Naive thymus-derived CD4-positive, alpha-beta T cell (primary cell): ENCODE measurements at regions of chr3 and their contacts with region 1.

Region 1: DNA sequence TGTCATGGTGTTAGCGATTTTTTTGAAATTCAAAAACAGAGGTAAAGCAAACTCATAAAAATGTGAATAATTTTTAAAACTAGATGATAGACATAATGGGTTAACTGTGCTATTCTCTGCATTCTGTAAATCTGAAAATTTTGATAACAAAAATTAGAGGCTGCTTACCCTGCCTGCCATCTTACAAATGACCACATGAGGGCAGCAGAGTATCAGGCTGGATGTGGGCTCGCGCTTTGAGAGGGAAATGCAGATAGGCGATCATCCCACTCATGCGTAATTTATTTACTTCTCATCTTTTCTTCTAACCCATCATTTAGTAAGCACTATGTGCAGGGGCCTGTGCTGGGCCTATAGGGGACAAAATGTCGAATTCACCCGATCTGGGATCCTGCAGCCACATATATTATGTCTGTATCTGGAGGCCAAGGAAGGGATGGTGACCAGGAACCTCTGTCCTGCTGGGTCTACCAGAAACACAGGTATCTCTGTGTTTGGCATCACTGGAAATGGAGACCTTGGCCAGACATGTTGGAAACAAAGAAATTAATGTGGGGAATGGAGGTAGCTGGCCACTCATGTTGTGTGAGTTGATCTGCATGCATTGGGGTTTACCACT is 7.8 kb upstream of the RAD18 start:
- DNase-seq: peak; percentile 32 to 84 (median 70)
- ATAC-seq: peak; percentile 91
- H3K4me3 ChIP-seq: no peak overlapping the region
- H3K4me3 Mint-ChIP-seq: peak overlapping the region in 1 of 10 donors; percentile 47
- H3K27ac ChIP-seq: no peak overlapping the region
- H3K27ac Mint-ChIP-seq: no peak overlapping the region
- H3K4me1 ChIP-seq: no peaks in the 10 kb centered on the region
- H3K4me1 Mint-ChIP-seq: peaks cover 0 to 5% (median 0%) of the 10 kb centered on the region in 7 donors
- H3K27me3 ChIP-seq: no peaks in the 10 kb centered on the region
- H3K27me3 Mint-ChIP-seq: peaks cover 5 to 20% (median 13%) of the 10 kb centered on the region in 5 donors

Region 2: DNA sequence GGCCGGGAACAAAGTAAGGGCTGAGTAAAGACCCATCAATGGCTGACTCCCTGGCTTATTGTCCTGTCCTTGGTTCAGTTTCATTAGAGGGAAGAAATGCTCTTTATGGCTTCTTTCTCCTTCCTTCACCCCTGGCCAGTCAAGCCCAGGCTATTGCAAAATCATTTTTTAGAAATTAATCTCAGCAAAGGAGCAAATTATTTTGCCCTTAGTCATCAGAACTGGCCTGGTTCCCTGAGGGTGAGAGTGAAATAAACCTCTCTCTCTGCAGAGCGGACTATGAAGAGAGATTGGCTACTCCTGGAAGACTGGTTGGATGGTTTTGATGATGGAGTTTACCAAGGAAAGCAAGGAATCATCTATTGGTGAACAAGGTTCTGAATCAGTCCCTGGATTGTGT is 148.9 kb before region 1 on chr3:
- CTCF ChIA-PET with region 1: no interaction called
- POLR2A ChIA-PET with region 1: no interaction called
- intact Hi-C with region 1: no loop called
- DNase-seq: no peak
- ATAC-seq: no peak
- H3K4me3 ChIP-seq: no peak overlapping the region
- H3K4me3 Mint-ChIP-seq: no peak overlapping the region
- H3K27ac ChIP-seq: no peak overlapping the region
- H3K27ac Mint-ChIP-seq: no peak overlapping the region
- H3K4me1 ChIP-seq: no peaks in the 10 kb centered on the region
- H3K4me1 Mint-ChIP-seq: peaks cover 0 to 1% (median 0%) of the 10 kb centered on the region in 7 donors
- H3K27me3 ChIP-seq: no peaks in the 10 kb centered on the region
- H3K27me3 Mint-ChIP-seq: peaks cover 0 to 5% (median 0%) of the 10 kb centered on the region in 5 donors

Region 3: GRCh38 chr3:9067352-9067975 is 96.4 kb after region 1 on chr3:
- CTCF ChIA-PET with region 1: no interaction called
- POLR2A ChIA-PET with region 1: no interaction called
- intact Hi-C with region 1: loop called (anchors 1 kb)
- DNase-seq: peak in 4 of 9 donors; percentile 3 to 15 (median 10)
- ATAC-seq: peak; percentile 47
- H3K4me3 ChIP-seq: no peak overlapping the region
- H3K4me3 Mint-ChIP-seq: no peak overlapping the region
- H3K27ac ChIP-seq: no peak overlapping the region
- H3K27ac Mint-ChIP-seq: no peak overlapping the region
- H3K4me1 ChIP-seq: no peaks in the 10 kb centered on the region
- H3K4me1 Mint-ChIP-seq: peaks cover 0 to 7% (median 0%) of the 10 kb centered on the region in 7 donors
- H3K27me3 ChIP-seq: no peaks in the 10 kb centered on the region
- H3K27me3 Mint-ChIP-seq: peaks cover 0 to 7% (median 0%) of the 10 kb centered on the region in 5 donors

Region 4: DNA sequence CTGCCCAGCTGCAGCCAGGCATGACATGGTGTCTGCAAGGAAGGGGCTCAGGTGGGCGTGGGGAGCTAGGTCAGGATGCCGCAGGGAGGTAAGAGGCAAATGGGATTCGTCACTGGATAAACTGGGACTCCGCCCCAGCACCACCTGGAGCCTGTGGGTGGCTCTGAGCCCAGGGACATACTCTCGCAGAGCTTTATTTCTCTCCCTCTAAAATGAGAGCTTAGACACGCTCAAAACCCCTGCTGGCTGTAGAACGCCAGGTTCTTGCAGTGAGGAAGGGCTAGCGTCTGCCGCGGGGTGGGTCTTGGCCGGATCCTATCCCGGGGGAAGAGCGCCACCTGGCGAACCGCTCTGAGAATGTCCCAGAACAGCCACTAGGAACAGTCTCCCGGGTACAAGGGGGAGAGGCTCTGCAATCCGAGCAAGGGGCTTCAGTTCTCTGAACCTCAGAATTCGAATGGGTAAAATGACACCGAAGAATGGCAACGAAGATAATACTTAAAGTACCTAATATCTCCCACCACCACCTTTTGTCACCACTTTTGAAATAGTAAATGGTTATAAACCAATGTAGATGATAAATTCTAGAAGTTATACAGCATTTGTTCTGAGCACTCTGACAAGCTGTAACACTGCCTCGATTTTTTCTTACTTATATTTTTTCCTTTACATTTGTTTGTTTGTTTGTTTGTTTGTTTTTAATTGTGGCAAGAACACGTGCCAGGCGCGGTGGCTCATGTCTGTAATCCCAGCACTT is 331.5 kb after region 1 on chr3:
- CTCF ChIA-PET with region 1: interaction called, 95 read pairs
- POLR2A ChIA-PET with region 1: interaction called, 3 read pairs
- intact Hi-C with region 1: loop called (anchors 1 kb)
- DNase-seq: peak; percentile 59 to 82 (median 76)
- ATAC-seq: peak; percentile 96
- H3K4me3 ChIP-seq: peak overlapping the region; percentile 55
- H3K4me3 Mint-ChIP-seq: peak overlapping the region in 8 of 10 donors; percentile 35 to 71 (median 47)
- H3K27ac ChIP-seq: no peak overlapping the region
- H3K27ac Mint-ChIP-seq: peak overlapping the region in 1 of 9 donors; percentile 12
- H3K4me1 ChIP-seq: peaks cover 4 to 5% of the 10 kb centered on the region in 2 donors
- H3K4me1 Mint-ChIP-seq: peaks cover 0 to 12% (median 7%) of the 10 kb centered on the region in 7 donors
- H3K27me3 ChIP-seq: no peaks in the 10 kb centered on the region
- H3K27me3 Mint-ChIP-seq: peaks cover 0 to 6% (median 3%) of the 10 kb centered on the region in 5 donors

Region 5: GRCh38 chr3:9422712-9423424 is 451.8 kb after region 1 on chr3:
- CTCF ChIA-PET with region 1: interaction called, 3 read pairs
- POLR2A ChIA-PET with region 1: no interaction called
- intact Hi-C with region 1: loop called in 1 of 2 experiments (anchors 1 kb)
- DNase-seq: peak in 7 of 9 donors; percentile 20 to 46 (median 37)
- ATAC-seq: peak; percentile 86
- H3K4me3 ChIP-seq: no peak overlapping the region
- H3K4me3 Mint-ChIP-seq: peak overlapping the region in 4 of 10 donors; percentile 2 to 26 (median 4)
- H3K27ac ChIP-seq: peak overlapping the region; percentile 26
- H3K27ac Mint-ChIP-seq: peak overlapping the region; percentile 23 to 91 (median 84)
- H3K4me1 ChIP-seq: peaks cover 0 to 9% of the 10 kb centered on the region in 2 donors
- H3K4me1 Mint-ChIP-seq: peaks cover 23 to 63% (median 56%) of the 10 kb centered on the region in 7 donors
- H3K27me3 ChIP-seq: no peaks in the 10 kb centered on the region
- H3K27me3 Mint-ChIP-seq: no peaks in the 10 kb centered on the region

Region 6: GRCh38 chr3:10738688-10739372 is 1767.8 kb after region 1 on chr3:
- CTCF ChIA-PET with region 1: no interaction called
- POLR2A ChIA-PET with region 1: no interaction called
- intact Hi-C with region 1: loop called in 1 of 2 experiments (anchors 5 kb)
- DNase-seq: peak; percentile 31 to 76 (median 58)
- ATAC-seq: peak; percentile 72
- H3K4me3 ChIP-seq: peak overlapping the region; percentile 32
- H3K4me3 Mint-ChIP-seq: peak overlapping the region; percentile 9 to 74 (median 51)
- H3K27ac ChIP-seq: no peak overlapping the region
- H3K27ac Mint-ChIP-seq: peak overlapping the region in 1 of 9 donors; percentile 51
- H3K4me1 ChIP-seq: peaks cover 0 to 6% of the 10 kb centered on the region in 2 donors
- H3K4me1 Mint-ChIP-seq: peaks cover 3 to 16% (median 9%) of the 10 kb centered on the region in 7 donors
- H3K27me3 ChIP-seq: peaks cover 0 to 10% of the 10 kb centered on the region in 2 donors
- H3K27me3 Mint-ChIP-seq: peaks cover 28 to 72% (median 53%) of the 10 kb centered on the region in 5 donors